ENCODE measurements at regions of chr4 and their contacts with region 1.

Region 1: DNA sequence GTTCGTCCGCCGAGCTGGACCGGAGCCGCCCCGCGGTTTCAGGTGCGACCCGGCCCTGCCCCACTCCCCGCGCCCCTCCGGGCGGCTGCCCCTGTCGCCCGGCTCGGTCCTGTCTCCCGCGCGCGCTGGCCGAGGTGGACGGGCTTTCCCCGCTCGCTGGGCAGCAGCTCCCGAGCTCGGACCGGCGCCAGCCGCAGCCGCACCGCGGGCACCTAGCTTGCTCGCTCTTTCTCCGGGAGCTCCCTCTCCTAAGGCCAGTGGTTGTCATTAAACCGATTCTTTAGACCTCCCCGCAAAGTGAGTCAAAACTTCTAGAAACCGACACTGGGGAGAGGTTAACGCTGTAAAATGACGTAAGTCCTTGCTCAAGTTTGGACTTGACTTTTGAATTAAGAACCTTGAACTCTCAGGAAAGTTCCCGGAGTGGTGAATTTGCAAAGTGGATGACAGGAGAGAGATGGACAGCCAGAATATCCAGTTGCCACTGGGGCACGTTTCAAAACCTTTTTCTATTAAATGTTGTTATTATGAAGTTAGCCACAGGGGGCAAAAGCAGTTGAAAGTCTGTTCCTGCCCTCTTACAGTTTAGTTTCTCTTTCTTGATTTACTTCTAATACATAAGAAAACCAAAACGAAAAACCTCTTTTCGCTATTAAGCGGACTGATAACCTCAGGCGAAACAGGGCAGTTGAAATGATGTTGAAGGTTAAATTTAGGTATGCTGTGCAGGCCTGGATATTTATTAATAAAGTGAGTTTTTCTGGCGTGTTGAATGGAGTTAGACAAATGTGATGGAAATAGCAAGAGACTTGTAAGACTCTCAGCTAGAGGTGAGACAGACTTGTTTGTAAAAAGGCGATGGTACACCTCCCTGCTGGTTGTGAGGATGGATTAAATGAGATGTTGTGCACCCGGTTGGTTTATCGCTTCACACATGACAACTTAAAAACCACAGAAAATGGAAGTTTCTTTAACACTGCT is 847 bp downstream of the PI4K2B start:
- DNase-seq: peak; percentile 38
- H3K4me3 Mint-ChIP-seq: peak overlapping the region; percentile 92
- H3K27ac Mint-ChIP-seq: peak overlapping the region; percentile 98
- H3K4me1 Mint-ChIP-seq: peaks cover 37% of the 10 kb centered on the region
- H3K27me3 Mint-ChIP-seq: no peaks in the 10 kb centered on the region

Region 2: GRCh38 chr4:24472514-24473308 is 762.0 kb before region 1 on chr4:
- intact Hi-C with region 1: loop called (anchors 5 kb)
- DNase-seq: peak; percentile 43
- H3K4me3 Mint-ChIP-seq: peak overlapping the region; percentile 92
- H3K27ac Mint-ChIP-seq: peak overlapping the region; percentile 92
- H3K4me1 Mint-ChIP-seq: peaks cover 47% of the 10 kb centered on the region
- H3K27me3 Mint-ChIP-seq: peaks cover 62% of the 10 kb centered on the region

Region 3: GRCh38 chr4:24713604-24714003 is 521.1 kb before region 1 on chr4:
- intact Hi-C with region 1: no loop called
- DNase-seq: no peak
- H3K4me3 Mint-ChIP-seq: no peak overlapping the region
- H3K27ac Mint-ChIP-seq: no peak overlapping the region
- H3K4me1 Mint-ChIP-seq: no peaks in the 10 kb centered on the region
- H3K27me3 Mint-ChIP-seq: no peaks in the 10 kb centered on the region

Region 4: DNA sequence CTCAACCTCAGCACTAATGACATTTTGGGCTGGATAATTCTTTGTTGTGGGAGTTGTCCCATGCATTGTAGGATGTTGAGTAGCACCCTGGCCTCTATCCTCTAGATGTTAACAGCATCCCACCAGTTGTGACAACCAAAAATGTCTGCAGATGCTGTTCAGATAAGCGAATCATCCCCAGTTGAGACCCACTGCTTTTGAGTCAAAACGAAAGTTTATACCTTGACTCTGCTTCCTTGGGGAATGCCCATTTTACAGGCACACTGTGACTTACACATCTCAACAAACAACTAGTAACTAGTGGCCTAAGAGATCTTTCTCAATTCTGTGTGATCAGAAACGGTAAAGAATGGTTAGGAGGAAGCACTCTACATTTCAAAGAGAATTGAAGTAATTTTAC is 111.4 kb before region 1 on chr4:
- intact Hi-C with region 1: loop called (anchors 1 kb)
- DNase-seq: peak; percentile 26
- H3K4me3 Mint-ChIP-seq: no peak overlapping the region
- H3K27ac Mint-ChIP-seq: peak overlapping the region; percentile 64
- H3K4me1 Mint-ChIP-seq: peaks cover 22% of the 10 kb centered on the region
- H3K27me3 Mint-ChIP-seq: no peaks in the 10 kb centered on the region

Region 5: DNA sequence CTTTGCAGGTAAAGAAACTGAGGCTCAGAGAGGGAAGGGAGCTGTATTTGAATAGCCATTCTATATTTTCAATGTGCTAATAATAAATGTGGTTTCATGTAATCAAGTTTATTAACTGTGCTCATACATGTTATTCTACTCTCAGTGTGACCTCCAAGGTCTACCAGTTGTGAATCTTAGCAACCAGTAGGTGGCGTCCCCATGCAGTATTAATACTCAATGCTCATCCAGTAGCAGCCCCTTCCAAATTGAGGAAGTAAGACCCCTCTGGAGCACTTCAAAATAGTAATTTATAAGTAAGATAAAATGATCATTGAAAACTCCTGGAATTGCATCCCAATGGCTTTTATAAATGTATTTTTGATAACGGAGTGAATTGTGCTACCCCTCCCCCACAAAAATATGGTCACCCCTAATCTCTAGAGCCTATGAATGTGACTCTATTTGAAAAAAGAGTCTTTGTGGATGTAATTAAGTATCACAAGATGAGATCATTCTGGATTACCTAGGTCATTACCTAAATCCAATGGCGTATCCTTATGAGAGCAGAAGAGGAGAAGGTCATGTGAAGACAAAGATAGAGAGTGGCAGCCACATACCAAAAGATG is 54.1 kb before region 1 on chr4:
- intact Hi-C with region 1: loop called (anchors 1 kb)
- DNase-seq: no peak
- H3K4me3 Mint-ChIP-seq: no peak overlapping the region
- H3K27ac Mint-ChIP-seq: no peak overlapping the region
- H3K4me1 Mint-ChIP-seq: peaks cover 29% of the 10 kb centered on the region
- H3K27me3 Mint-ChIP-seq: no peaks in the 10 kb centered on the region

Region 6: DNA sequence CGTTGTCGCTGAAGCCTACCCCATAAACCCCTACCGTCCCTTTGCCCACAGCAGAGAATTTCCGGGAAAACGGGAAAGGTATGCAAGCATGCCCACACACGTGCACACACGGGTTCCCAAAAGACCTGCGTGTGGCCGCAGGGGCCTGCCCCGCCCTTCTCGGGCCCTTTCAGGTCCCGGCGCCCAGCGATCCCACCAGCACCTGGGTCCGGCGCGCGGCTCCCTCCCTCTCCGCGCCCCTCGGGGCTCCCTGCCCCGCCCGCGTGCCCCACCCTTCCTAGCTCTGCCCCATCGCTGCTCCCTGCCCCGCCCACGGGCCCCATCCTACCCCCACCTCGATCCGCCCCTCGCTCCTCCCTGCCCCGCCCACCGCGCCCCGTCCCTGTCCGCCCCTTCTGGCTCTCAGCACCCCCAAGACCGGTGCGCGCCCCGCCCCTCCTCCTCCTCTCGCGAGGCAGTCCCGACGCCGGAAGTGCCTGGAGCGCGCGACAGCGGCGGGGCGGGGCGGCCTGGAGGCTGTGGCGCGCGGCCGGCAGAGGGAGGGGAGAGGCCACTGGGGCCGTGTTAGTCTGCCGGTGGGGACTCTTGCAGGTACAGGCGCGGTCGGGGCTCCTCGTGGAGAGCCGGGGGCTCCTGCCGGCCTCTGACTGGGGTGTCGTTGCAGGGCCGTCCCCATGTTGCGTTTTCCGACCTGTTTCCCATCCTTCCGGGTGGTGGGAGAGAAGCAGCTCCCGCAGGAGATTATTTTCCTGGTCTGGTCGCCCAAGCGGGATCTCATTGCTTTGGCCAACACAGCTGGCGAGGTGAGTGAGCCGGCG is 142.3 kb after region 1 on chr4 and contains the start of gene ANAPC4:
- intact Hi-C with region 1: loop called (anchors 1 kb)
- DNase-seq: peak; percentile 95
- H3K4me3 Mint-ChIP-seq: no peak within 1 kb of the TSS
- H3K27ac Mint-ChIP-seq: peak within 1 kb of the TSS; percentile 91
- H3K4me1 Mint-ChIP-seq: no peaks in the 10 kb centered on the region
- H3K27me3 Mint-ChIP-seq: no peaks in the 10 kb centered on the region
- total RNA-seq, gene ANAPC4: 36.0 and 39.9 TPM in 2 replicates

Region 7: DNA sequence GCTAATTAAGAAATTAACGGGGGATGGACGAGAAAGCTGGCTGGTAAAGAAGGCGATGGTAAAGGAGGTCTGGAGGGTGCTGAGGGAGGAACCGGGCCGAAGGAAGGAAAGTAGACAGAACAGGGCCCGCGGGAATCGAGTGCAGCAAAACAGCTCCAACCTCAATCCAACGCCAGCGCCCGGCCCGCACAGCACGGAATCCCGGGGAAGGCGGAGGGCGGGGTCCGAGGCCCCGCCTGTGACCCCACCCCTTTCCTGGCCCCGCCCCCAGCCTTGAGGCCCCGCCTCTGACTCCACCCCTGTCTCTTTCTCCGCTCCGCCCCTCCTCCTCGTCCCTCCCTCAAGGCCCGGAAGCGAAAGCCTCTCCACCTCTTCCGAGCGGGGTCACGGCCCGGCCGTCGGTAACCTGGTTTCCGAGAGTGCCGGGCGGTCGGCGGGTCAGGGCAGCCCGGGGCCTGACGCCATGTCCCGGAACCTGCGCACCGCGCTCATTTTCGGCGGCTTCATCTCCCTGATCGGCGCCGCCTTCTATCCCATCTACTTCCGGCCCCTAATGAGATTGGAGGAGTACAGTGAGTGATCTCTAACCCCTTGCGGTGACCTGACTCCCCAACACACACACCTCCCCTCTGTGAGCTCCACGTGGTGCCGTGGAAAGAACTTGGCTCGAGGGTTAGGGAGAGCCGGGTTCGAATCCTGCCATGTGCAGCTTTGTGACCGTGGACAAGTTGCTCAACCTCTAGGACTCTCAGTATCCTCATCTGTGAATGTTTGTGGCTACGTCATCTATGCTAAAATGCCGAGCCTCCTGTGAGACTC is 679.4 kb after region 1 on chr4 and contains the start of gene SMIM20:
- intact Hi-C with region 1: loop called (anchors 10 kb)
- DNase-seq: peak; percentile 88
- H3K4me3 Mint-ChIP-seq: peak within 1 kb of the TSS; percentile 94
- H3K27ac Mint-ChIP-seq: peak within 1 kb of the TSS; percentile 99
- H3K4me1 Mint-ChIP-seq: peaks cover 24% of the 10 kb centered on the region
- H3K27me3 Mint-ChIP-seq: peaks cover 5% of the 10 kb centered on the region
- total RNA-seq, gene SMIM20: 19.2 and 21.5 TPM in 2 replicates